OCI-LY7 (cell line): ENCODE measurements at regions of chr11 and their contacts with region 1.

Region 1: GRCh38 chr11:96275811-96276594 is 67.0 kb downstream of the MAML2 start:
- DNase-seq: no peak
- H3K4me3 ChIP-seq: no peak overlapping the region
- H3K27ac ChIP-seq: no peak overlapping the region
- H3K4me1 ChIP-seq: no peaks in the 10 kb centered on the region
- CTCF ChIP-seq: no peak

Region 2: GRCh38 chr11:96287822-96288439 is 11.9 kb after region 1 on chr11:
- CTCF ChIA-PET with region 1: no interaction called
- POLR2A ChIA-PET with region 1: interaction called, 14 read pairs
- intact Hi-C with region 1: no loop called
- DNase-seq: no peak
- H3K4me3 ChIP-seq: no peak overlapping the region
- H3K27ac ChIP-seq: no peak overlapping the region
- H3K4me1 ChIP-seq: no peaks in the 10 kb centered on the region
- CTCF ChIP-seq: no peak

Region 3: DNA sequence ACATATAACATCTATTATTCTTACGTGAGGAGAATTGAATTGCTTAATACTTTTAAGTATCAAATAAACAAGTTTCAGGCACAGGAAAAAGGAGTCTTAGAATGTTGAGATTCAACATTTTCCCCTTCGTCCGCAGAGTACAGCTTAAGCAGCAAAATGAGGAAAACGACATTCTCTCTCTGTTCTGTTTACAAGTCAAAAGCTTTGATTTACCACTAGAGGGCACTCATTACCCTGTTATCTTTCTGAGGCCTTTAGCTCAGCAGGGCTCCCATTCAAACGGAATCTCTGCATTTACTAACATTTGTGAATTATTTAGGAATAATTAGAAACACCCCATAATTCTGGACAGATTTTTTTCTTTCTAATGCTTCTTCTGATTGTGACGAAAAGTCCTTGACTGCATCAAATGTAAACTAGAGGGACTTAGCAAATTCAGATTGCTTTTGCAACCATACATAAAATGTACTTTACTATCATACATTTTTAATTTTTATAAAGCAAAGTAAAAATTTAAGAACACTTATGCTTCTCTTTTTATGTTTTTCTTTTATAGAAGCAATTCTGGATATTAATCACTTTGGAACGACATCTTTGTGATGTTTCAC is 188.8 kb after region 1 on chr11:
- CTCF ChIA-PET with region 1: no interaction called
- POLR2A ChIA-PET with region 1: no interaction called
- intact Hi-C with region 1: no loop called
- DNase-seq: peak; percentile 77
- H3K4me3 ChIP-seq: no peak overlapping the region
- H3K27ac ChIP-seq: no peak overlapping the region
- H3K4me1 ChIP-seq: no peaks in the 10 kb centered on the region
- CTCF ChIP-seq: peak; percentile 93